CD8-positive, alpha-beta T cell (primary cell): ENCODE measurements at regions of chr2 and their contacts with region 1.

Region 1: GRCh38 chr2:111705711-111706336 is 178.2 kb downstream of the ANAPC1 start:
- DNase-seq: peak in 3 of 9 experiments; percentile 12 to 35 (median 27)
- ATAC-seq: peak; percentile 49
- H3K4me3 ChIP-seq: no peak overlapping the region
- H3K4me3 Mint-ChIP-seq: no peak overlapping the region
- H3K27ac ChIP-seq: no peak overlapping the region
- H3K27ac Mint-ChIP-seq: no peak overlapping the region
- H3K4me1 ChIP-seq: peaks cover 3% of the 10 kb centered on the region
- H3K4me1 Mint-ChIP-seq: peaks cover 2% of the 10 kb centered on the region
- H3K27me3 ChIP-seq: no peaks in the 10 kb centered on the region
- H3K27me3 Mint-ChIP-seq: peaks cover 3% of the 10 kb centered on the region
- CTCF ChIP-seq: no peak

Region 2: DNA sequence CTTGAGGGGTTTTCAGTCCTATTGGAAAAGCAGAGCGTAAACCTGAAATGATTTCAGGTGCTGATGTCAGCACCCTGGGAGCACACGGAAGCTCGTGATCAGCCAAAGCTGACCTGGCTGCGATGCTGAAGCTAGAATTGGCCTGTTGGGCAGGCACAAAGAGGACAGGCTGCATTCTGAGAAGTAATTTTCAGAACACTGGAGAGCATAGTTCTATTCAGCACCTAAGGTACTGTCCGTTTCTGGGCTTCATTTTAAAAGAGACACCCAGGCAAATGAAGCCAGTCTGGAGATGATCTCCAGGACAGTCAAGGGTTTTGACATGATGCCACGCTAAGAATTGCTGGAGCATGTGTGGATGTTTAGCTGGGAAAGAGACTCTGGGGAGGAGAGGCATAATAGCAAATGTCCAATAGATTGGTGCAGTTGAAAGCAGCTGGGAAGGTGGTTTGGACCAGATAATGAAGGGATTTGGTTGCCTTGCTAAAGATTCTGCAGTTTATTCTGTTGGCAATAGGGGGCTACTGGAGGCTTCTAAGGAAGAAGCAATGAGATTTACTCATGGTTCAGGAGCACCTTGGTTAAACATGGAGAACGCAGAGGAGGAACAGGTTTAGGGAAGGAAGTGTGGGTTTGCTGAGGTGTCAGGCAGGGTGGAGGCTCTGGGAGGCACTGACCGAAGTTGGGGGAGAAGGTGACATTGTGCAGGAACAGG is 886.9 kb before region 1 on chr2:
- CTCF ChIA-PET with region 1: no interaction called
- POLR2A ChIA-PET with region 1: no interaction called
- intact Hi-C with region 1: loop called in 1 of 2 experiments (anchors 10 kb)
- DNase-seq: peak in 1 of 9 experiments; percentile 27
- ATAC-seq: no peak
- H3K4me3 ChIP-seq: no peak overlapping the region
- H3K4me3 Mint-ChIP-seq: no peak overlapping the region
- H3K27ac ChIP-seq: no peak overlapping the region
- H3K27ac Mint-ChIP-seq: no peak overlapping the region
- H3K4me1 ChIP-seq: peaks cover 5% of the 10 kb centered on the region
- H3K4me1 Mint-ChIP-seq: peaks cover 17% of the 10 kb centered on the region
- H3K27me3 ChIP-seq: no peaks in the 10 kb centered on the region
- H3K27me3 Mint-ChIP-seq: no peaks in the 10 kb centered on the region
- CTCF ChIP-seq: no peak

Region 3: DNA sequence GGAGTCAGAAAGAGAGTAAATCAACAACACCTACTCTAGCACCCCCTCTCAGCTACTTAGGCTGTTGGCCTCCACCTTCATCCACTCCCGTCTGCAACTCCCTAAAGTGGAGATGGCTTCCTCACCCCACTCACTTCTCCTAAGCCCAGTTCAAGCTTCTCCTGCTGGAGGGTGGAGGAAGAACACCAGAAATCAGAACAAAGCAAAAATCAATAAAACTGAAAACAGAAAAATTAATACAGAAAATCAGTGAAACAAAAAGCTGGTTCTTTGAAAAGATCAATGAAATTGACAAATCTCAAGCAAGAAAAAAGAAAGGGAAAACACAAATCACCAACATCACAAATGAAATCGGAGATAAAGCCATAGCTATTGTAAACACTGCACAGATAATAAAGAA is 13.5 kb before region 1 on chr2:
- CTCF ChIA-PET with region 1: interaction called, 15 read pairs
- POLR2A ChIA-PET with region 1: no interaction called
- intact Hi-C with region 1: no loop called
- DNase-seq: no peak
- ATAC-seq: no peak
- H3K4me3 ChIP-seq: no peak overlapping the region
- H3K4me3 Mint-ChIP-seq: no peak overlapping the region
- H3K27ac ChIP-seq: no peak overlapping the region
- H3K27ac Mint-ChIP-seq: no peak overlapping the region
- H3K4me1 ChIP-seq: no peaks in the 10 kb centered on the region
- H3K4me1 Mint-ChIP-seq: no peaks in the 10 kb centered on the region
- H3K27me3 ChIP-seq: no peaks in the 10 kb centered on the region
- H3K27me3 Mint-ChIP-seq: no peaks in the 10 kb centered on the region
- CTCF ChIP-seq: no peak